Activated CD8-positive, alpha-beta T cell treated with anti-CD3 and anti-CD28 coated beads, Interleukin-2, amount 10 ng/mL, durations not matched to agents 7 days and 5 days (primary cell): ENCODE measurements at regions of chr18 and their contacts with region 1.

Region 1: GRCh38 chr18:46281185-46282176 is 177.3 kb downstream of the HAUS1 start:
- DNase-seq: peak; percentile 74
- ATAC-seq: peak; percentile 87
- H3K4me3 Mint-ChIP-seq: no peak overlapping the region
- H3K27ac Mint-ChIP-seq: no peak overlapping the region
- H3K4me1 Mint-ChIP-seq: peaks cover 15% of the 10 kb centered on the region
- H3K27me3 Mint-ChIP-seq: no peaks in the 10 kb centered on the region

Region 2: DNA sequence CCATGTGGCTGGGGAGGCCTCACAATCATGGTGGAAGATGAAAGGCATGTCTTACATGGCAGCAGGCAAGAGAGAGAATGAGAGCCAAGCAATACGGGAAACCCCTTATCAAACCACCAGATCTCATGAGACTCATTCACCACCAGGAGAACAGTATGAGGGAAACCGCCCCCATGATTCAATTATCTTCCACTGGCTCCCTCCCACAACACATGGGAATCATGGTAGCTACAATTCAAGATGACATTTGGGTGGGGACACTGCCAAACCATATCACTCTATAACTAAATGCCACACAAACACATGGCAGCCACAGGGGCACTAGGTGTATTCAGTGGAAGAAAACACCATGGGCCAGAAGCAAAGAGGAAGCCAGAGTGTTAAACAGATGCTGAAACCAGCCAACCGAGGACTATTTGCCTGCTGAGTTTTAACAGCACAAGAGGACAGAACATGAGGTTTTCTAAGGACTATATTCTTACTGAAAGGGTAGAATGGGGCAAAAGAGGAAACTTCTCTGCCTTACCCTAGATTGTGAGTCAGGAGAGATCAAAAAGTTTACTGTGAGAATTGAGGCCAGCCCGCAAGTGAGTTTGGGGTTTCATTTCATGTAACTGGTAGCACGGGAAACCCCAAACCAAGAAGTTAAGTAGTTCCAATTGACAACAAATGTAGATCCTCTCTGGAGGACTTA is 406.8 kb before region 1 on chr18:
- CTCF ChIA-PET with region 1: no interaction called
- POLR2A ChIA-PET with region 1: no interaction called
- DNase-seq: peak; percentile 81
- ATAC-seq: peak; percentile 88
- H3K4me3 Mint-ChIP-seq: peak overlapping the region; percentile 2
- H3K27ac Mint-ChIP-seq: peak overlapping the region; percentile 80
- H3K4me1 Mint-ChIP-seq: peaks cover 27% of the 10 kb centered on the region
- H3K27me3 Mint-ChIP-seq: no peaks in the 10 kb centered on the region

Region 3: DNA sequence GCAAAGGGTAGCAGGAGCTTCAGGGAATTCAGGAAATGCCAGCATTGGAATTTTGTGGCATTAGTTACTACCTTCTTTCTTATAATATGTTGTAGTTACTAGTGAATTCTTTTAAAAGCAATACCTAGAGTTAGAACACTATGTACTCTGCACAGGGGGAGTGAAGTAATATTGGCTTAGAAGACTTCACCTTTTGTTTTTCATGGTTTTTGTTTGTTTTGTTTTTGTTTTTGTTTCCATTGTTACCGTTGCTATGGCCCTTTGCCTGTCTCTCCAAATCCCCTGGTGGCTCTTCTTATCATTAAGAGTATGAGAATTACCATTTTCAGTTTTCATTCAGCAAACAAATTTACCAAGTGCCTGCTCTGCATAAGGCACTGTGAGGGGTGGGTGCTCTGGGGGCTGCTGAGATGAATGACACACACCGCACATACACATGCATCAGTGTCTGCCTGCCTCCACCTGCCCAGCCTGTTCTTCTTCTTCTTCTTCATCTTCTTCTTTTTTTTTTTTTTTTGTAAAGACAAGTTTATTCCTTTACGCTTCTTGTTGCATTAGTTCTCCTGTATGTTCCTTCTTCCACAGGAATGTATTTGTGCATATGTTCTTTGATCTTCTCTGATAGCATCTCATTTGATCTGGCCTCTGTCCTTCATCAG is 17.1 kb before region 1 on chr18:
- CTCF ChIA-PET with region 1: interaction called, 17 read pairs
- POLR2A ChIA-PET with region 1: no interaction called
- DNase-seq: no peak
- ATAC-seq: peak; percentile 57
- H3K4me3 Mint-ChIP-seq: no peak overlapping the region
- H3K27ac Mint-ChIP-seq: no peak overlapping the region
- H3K4me1 Mint-ChIP-seq: peaks cover 73% of the 10 kb centered on the region
- H3K27me3 Mint-ChIP-seq: no peaks in the 10 kb centered on the region

Region 4: DNA sequence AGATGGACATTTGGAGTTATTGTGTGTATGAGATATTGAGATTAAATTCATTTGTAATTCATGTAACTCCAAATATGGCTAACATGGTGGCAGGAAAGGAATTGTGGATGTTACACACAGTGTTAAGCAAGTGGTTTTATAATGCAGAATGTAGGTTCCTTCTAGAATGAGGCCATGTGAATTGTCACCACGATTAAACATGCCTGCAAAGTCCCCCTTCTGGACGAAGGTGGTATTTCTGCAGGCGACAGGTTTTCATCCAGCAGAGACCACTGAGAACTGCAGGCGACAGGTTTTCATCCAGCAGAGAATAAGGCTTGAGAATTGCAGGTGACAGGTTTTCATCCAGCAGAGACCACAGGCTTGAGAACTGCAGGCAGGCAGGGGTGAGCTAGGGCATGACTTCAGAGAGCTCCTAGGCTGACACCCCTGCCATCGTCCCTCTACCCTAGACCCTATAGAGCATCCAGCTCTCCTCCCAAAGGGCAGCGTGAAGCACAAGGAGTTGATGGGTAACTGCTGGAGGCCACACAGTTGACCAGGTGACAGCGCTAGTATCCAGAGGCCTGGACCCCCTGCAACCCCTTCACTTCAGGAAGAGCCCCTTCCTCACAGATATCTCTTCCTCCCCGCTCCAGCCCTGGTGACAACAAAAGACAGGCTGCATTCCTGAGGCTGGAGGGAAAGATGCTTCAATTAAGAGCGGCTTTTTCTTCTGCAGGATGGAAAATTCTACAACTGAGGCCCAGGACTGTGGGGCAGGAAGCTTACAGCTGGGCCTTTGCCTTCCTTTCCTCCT is 199.8 kb after region 1 on chr18:
- CTCF ChIA-PET with region 1: interaction called, 26 read pairs
- POLR2A ChIA-PET with region 1: no interaction called
- DNase-seq: peak; percentile 72
- ATAC-seq: peak; percentile 73
- H3K4me3 Mint-ChIP-seq: no peak overlapping the region
- H3K27ac Mint-ChIP-seq: no peak overlapping the region
- H3K4me1 Mint-ChIP-seq: peaks cover 5% of the 10 kb centered on the region
- H3K27me3 Mint-ChIP-seq: peaks cover 9% of the 10 kb centered on the region

Region 5: GRCh38 chr18:46622999-46623398 is 341.5 kb after region 1 on chr18:
- CTCF ChIA-PET with region 1: interaction called, 53 read pairs
- POLR2A ChIA-PET with region 1: no interaction called
- DNase-seq: no peak
- ATAC-seq: peak; percentile 43
- H3K4me3 Mint-ChIP-seq: no peak overlapping the region
- H3K27ac Mint-ChIP-seq: peak overlapping the region; percentile 88
- H3K4me1 Mint-ChIP-seq: peaks cover 46% of the 10 kb centered on the region
- H3K27me3 Mint-ChIP-seq: peaks cover 2% of the 10 kb centered on the region